Activated naive CD4-positive, alpha-beta T cell treated with anti-CD3 and anti-CD28 coated beads, Interleukin-2, amount 10 ng/mL, durations not matched to agents 7 days and 5 days (primary cell): ENCODE measurements at regions of chr12 and their contacts with region 1.

Region 1: DNA sequence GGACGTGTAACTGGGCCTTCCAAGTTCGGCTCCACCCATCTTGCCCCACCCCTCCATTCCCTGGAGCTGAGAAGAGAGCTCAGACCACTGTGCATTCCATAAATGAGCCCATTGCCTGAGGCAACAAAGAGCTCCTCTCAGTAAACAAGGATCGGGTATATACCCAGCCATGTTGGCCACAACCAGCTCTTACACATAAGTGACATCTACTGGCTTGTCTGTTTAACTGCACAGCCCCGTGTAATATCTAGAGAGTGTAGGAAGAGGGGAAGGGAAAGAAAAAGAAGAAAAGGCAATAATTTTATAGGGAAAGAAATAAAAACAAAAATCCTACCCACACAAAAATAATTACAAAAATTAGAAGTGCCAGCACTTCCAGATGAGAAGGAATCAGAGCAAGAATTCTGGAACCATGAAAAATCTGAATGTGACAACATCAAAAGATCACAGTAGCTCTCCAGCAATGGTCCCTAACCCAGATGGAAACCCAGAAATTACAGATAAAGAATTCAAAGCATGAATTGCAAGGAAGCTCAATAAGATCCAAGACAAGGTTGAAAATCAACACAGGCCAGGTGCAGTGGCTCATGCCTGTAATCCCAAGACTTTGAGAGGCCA is 308.1 kb downstream of the RPAP3 start:
- DNase-seq: peak; percentile 61
- H3K4me3 Mint-ChIP-seq: no peak overlapping the region
- H3K27ac Mint-ChIP-seq: peak overlapping the region; percentile 84
- H3K4me1 Mint-ChIP-seq: peaks cover 75% of the 10 kb centered on the region
- H3K27me3 Mint-ChIP-seq: no peaks in the 10 kb centered on the region

Region 2: GRCh38 chr12:47032644-47033043 is 365.1 kb before region 1 on chr12:
- CTCF ChIA-PET with region 1: interaction called, 68 read pairs
- DNase-seq: peak; percentile 22
- H3K4me3 Mint-ChIP-seq: no peak overlapping the region
- H3K27ac Mint-ChIP-seq: no peak overlapping the region
- H3K4me1 Mint-ChIP-seq: peaks cover 19% of the 10 kb centered on the region
- H3K27me3 Mint-ChIP-seq: no peaks in the 10 kb centered on the region

Region 3: GRCh38 chr12:47194501-47194900 is 203.3 kb before region 1 on chr12:
- CTCF ChIA-PET with region 1: interaction called, 20 read pairs
- DNase-seq: no peak
- H3K4me3 Mint-ChIP-seq: no peak overlapping the region
- H3K27ac Mint-ChIP-seq: peak overlapping the region; percentile 89
- H3K4me1 Mint-ChIP-seq: peaks cover 67% of the 10 kb centered on the region
- H3K27me3 Mint-ChIP-seq: no peaks in the 10 kb centered on the region

Region 4: GRCh38 chr12:47307680-47308399 is 89.9 kb before region 1 on chr12:
- CTCF ChIA-PET with region 1: interaction called, 38 read pairs
- DNase-seq: peak; percentile 68
- H3K4me3 Mint-ChIP-seq: peak overlapping the region; percentile 78
- H3K27ac Mint-ChIP-seq: peak overlapping the region; percentile 87
- H3K4me1 Mint-ChIP-seq: peaks cover 49% of the 10 kb centered on the region
- H3K27me3 Mint-ChIP-seq: no peaks in the 10 kb centered on the region

Region 5: GRCh38 chr12:47383942-47384341 is 13.8 kb before region 1 on chr12:
- CTCF ChIA-PET with region 1: interaction called, 28 read pairs
- DNase-seq: no peak
- H3K4me3 Mint-ChIP-seq: no peak overlapping the region
- H3K27ac Mint-ChIP-seq: no peak overlapping the region
- H3K4me1 Mint-ChIP-seq: peaks cover 68% of the 10 kb centered on the region
- H3K27me3 Mint-ChIP-seq: no peaks in the 10 kb centered on the region

Region 6: GRCh38 chr12:47422611-47423010 is 24.8 kb after region 1 on chr12:
- CTCF ChIA-PET with region 1: no interaction called
- DNase-seq: no peak
- H3K4me3 Mint-ChIP-seq: no peak overlapping the region
- H3K27ac Mint-ChIP-seq: no peak overlapping the region
- H3K4me1 Mint-ChIP-seq: peaks cover 9% of the 10 kb centered on the region
- H3K27me3 Mint-ChIP-seq: no peaks in the 10 kb centered on the region

Region 7: DNA sequence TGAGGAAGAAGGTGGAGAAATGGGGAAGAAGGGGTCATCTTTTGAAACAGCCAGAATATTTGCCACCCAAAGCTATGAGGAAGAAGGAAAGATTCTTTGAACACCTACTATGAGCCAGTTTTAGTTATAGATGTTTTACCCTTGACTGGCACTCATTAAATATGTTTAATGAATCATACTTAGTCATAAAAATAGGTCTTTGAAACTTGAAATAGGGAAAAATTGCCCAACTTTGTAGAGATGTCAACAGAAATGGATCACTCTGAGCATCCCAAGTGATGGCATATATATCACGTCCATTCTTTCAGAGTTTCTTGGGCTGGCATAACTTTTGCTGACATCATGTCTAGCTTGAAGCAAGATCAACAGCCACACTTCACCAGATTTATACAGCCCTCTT is 44.5 kb after region 1 on chr12:
- CTCF ChIA-PET with region 1: no interaction called
- DNase-seq: no peak
- H3K4me3 Mint-ChIP-seq: no peak overlapping the region
- H3K27ac Mint-ChIP-seq: no peak overlapping the region
- H3K4me1 Mint-ChIP-seq: no peaks in the 10 kb centered on the region
- H3K27me3 Mint-ChIP-seq: peaks cover 4% of the 10 kb centered on the region